Posterior vena cava (tissue), 2 donors: ENCODE measurements at regions of chr6 and their contacts with region 1.

Region 1: DNA sequence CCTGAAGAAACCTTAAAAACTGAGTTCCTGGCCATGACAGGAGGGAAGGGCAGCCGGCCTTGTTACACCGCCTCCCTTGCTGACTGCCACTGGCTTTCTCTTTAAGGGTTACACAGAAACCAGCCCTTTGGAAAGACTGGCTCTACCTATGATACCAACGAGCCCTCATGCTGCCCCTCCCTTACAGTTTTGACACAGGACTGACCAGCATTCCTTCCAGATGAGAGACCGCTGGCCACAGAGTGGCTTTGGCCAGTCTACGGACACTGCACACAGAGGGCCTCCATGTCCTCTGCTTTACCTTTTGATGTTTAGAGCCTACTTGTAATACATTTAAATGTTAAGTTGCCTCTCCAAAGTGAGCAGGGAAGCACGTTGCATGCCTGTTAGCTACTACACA is 243.2 kb upstream of the GMDS start:
- DNase-seq: no peak

Region 2: DNA sequence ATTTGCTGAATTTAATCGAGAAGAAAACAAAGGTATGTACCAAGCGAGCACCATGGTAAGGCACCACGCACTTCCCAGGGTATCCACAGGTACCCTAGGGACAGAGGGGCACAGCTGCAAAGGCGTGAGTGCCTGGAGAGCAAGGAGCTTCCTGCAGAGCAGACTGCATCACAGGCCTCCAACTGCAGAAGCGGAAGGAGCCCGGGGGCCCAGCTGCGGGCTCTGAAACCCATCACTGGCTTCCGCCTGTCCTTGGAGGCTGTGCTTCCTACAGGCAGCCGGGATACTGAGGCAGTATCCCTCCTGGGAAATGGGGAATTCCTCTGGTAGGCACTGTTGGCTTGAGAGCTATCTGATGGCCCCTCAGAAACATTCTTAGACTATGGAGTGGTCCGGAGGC is 25.7 kb before region 1 on chr6:
- intact Hi-C with region 1: loop called in 1 of 2 experiments (anchors 1 kb)
- DNase-seq: no peak